Right ventricle myocardium inferior (tissue), 1 donor: ENCODE measurements at regions of chr19 and their contacts with region 1.

Region 1: DNA sequence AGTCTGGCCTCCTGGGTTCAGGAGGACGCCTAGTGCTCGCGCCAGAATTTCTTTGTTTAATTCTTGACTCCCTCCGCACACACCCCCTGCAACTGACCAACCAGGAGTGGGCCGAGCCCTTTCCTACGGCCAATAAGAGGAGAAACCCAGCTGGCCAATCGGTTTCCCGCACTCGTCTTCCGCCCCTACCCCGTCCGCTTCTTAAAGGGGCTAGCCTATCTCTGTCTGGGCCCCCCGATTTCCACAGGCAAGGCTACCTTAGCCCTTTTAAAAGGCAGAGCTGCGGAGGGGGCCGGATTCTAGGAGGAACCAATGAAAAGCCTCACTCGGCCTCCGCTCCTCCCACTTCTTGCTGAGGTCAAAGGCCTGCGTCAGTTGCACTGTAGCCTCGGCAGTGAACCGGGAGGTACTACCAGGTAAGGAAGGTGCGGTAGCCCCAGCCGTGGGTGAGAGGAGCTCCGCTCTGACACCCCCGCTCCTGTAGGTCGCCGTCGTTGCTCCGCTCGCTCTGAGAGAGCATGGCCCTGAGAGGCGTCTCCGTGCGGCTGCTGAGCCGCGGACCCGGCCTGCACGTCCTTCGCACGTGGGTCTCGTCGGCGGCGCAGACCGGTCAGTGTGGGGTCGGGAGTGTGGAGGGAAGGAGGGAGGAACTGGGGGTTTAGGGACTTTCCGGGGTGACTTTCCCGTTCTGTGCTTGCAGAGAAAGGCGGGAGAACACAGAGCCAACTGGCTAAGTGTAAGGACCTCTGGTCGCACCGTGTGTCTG is at the start of gene GCDH:
- DNase-seq: peak; percentile 99
- ATAC-seq: peak; percentile 99
- total RNA-seq, gene GCDH: 33.4 TPM

Region 2: DNA sequence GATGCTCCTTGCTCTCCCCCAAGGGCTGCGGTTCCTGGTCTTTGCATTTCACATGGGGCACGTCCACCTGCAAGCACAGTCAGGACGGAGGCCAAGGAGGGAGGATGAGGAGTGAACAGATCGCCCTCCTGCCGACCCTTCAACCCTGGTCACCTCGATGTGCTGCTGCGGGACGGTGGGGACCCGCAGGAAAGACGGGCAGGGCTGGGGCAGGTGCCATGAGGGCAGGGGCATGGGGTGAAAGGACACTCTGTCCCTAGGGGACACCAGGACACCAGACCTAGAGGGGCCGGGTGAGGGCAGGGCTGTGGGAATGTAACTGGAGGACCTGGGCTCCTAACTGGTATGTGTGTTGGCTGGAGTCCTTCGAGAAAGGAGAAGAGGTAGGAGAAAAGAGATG is 27.3 kb after region 1 on chr19:
- intact Hi-C with region 1: loop called (anchors 2 kb)
- DNase-seq: no peak
- ATAC-seq: no peak